ENCODE measurements at regions of chr17 and their contacts with region 1.

Region 1: GRCh38 chr17:19766422-19767270 is 18.5 kb upstream of the ALDH3A1 start:
- DNase-seq: peak; percentile 81 to 94 (median 93)
- ATAC-seq: peak; percentile 87 to 90
- H3K4me3 ChIP-seq: no peak overlapping the region
- H3K27ac ChIP-seq: no peak overlapping the region
- H3K4me1 ChIP-seq: no peaks in the 10 kb centered on the region
- H3K27me3 ChIP-seq: no peaks in the 10 kb centered on the region

Region 2: DNA sequence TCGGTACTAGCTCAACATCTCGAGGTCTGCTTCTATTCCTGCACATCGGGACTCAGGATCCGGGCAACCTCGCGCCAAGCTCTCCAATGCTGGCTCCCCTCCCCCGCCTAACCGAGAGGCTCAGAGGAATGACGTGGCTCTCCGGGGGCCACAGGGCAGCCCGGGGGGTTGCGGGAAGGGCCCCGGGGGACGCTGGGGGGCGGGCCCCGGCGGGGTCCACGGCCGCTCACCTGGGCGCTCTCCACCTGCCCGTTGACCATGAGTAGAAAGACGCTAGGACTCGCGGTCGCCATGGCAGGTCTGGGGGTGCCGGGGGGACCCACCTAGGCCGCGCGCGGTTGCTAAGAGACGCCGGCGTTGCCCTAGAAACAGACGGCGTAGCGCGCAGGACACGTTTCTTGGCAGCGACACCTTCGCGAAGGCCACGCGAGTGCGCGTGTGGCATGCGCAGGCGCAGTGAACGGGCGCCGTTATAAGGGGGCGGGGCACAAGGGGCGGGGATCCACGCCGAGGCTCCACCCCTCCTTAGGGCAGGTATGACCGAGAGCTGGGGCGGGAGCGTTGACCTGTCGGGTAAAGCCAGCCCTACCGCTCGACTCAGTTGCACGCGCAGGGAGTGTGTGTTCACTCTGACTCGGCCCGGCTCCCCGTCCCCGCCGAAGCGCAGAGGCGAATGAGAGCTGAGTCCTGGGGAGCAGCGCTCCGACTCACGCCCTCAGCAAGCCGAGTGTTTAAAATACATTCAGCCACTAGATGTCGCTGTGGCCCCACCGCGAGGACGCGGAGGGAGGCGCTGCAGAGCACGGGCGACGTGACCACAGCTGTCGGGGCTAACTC is 404.2 kb before region 1 on chr17 and contains the start of gene B9D1:
- intact Hi-C with region 1: loop called in 3 of 4 experiments (anchors 10 kb)
- DNase-seq: peak; percentile 93 to 97 (median 97)
- ATAC-seq: peak; percentile 94
- H3K4me3 ChIP-seq: peak within 1 kb of the TSS; percentile 52
- H3K27ac ChIP-seq: no peak within 1 kb of the TSS
- H3K4me1 ChIP-seq: peaks cover 2% of the 10 kb centered on the region
- H3K27me3 ChIP-seq: no peaks in the 10 kb centered on the region
- total RNA-seq, gene B9D1: 9.8 to 14.6 (median 12.1) TPM

Region 3: GRCh38 chr17:19513897-19514488 is 252.7 kb before region 1 on chr17:
- intact Hi-C with region 1: loop called (anchors 2 to 5 kb)
- DNase-seq: peak; percentile 57 to 82 (median 82)
- ATAC-seq: peak; percentile 78 to 79
- H3K4me3 ChIP-seq: no peak overlapping the region
- H3K27ac ChIP-seq: peak overlapping the region; percentile 74
- H3K4me1 ChIP-seq: no peaks in the 10 kb centered on the region
- H3K27me3 ChIP-seq: no peaks in the 10 kb centered on the region

Region 4: GRCh38 chr17:19857640-19858039 is 91.0 kb after region 1 on chr17:
- intact Hi-C with region 1: no loop called
- DNase-seq: no peak
- ATAC-seq: no peak
- H3K4me3 ChIP-seq: no peak overlapping the region
- H3K27ac ChIP-seq: no peak overlapping the region
- H3K4me1 ChIP-seq: no peaks in the 10 kb centered on the region
- H3K27me3 ChIP-seq: no peaks in the 10 kb centered on the region